CD8-positive, alpha-beta T cell (primary cell): ENCODE measurements at regions of chr7 and their contacts with region 1.

Region 1: GRCh38 chr7:126803060-126803665 is 449.6 kb downstream of the GRM8 start:
- DNase-seq: peak in 6 of 9 experiments; percentile 0 to 48 (median 16)
- ATAC-seq: no peak
- H3K4me3 ChIP-seq: no peak overlapping the region
- H3K4me3 Mint-ChIP-seq: no peak overlapping the region
- H3K27ac ChIP-seq: no peak overlapping the region
- H3K27ac Mint-ChIP-seq: no peak overlapping the region
- H3K4me1 ChIP-seq: no peaks in the 10 kb centered on the region
- H3K4me1 Mint-ChIP-seq: no peaks in the 10 kb centered on the region
- H3K27me3 ChIP-seq: no peaks in the 10 kb centered on the region
- H3K27me3 Mint-ChIP-seq: peaks cover 4% of the 10 kb centered on the region
- CTCF ChIP-seq: peak; percentile 49

Region 2: DNA sequence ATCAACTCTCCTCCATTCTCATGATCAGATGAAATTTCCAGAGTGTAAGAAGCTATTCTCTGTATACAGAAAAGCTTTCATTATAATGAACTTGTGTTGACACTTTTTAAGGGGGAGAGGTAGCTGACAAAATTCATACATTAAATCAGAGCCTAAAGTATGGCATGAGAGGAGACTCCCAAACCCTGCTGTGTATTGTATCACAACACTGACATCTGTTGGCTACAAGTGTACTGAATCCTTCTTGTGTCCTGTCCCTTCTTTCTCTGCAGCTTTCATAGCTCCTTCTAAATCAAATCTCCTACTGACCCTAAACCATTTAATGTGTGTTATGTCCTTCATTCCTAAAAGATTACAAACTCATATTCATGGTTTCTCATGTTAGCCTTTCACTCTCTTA is 711.3 kb after region 1 on chr7:
- CTCF ChIA-PET with region 1: interaction called, 4 read pairs
- POLR2A ChIA-PET with region 1: no interaction called
- intact Hi-C with region 1: loop called in 1 of 2 experiments (anchors 2 kb)
- DNase-seq: peak in 3 of 9 experiments; percentile 5 to 70 (median 55)
- ATAC-seq: peak; percentile 57
- H3K4me3 ChIP-seq: no peak overlapping the region
- H3K4me3 Mint-ChIP-seq: no peak overlapping the region
- H3K27ac ChIP-seq: no peak overlapping the region
- H3K27ac Mint-ChIP-seq: no peak overlapping the region
- H3K4me1 ChIP-seq: no peaks in the 10 kb centered on the region
- H3K4me1 Mint-ChIP-seq: no peaks in the 10 kb centered on the region
- H3K27me3 ChIP-seq: no peaks in the 10 kb centered on the region
- H3K27me3 Mint-ChIP-seq: peaks cover 17% of the 10 kb centered on the region
- CTCF ChIP-seq: peak; percentile 62

Region 3: DNA sequence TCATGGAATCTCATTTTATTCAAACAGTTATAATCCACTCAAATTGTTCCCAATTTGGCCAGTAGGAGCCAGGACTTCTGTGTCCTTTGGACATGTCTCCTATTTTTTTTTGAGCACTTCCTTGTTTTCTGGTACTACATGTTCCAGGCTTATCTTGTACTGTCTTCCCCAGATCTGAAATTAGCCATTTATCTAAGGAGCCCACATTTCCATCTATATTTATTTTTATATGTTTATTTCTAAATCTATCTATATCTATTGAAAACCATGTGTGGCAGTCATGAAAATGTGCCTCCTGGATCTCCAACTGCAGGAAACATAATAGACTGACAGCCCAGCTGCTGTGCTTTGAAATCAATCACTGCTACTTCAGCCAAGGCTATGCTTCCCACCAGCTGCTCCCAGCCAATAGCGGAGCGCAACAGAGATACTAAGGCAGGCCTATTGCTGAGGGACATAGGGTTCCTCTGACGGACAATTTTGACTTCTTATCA is 1081.0 kb after region 1 on chr7:
- CTCF ChIA-PET with region 1: no interaction called
- POLR2A ChIA-PET with region 1: no interaction called
- intact Hi-C with region 1: no loop called
- DNase-seq: no peak
- ATAC-seq: no peak
- H3K4me3 ChIP-seq: no peak overlapping the region
- H3K4me3 Mint-ChIP-seq: no peak overlapping the region
- H3K27ac ChIP-seq: no peak overlapping the region
- H3K27ac Mint-ChIP-seq: no peak overlapping the region
- H3K4me1 ChIP-seq: no peaks in the 10 kb centered on the region
- H3K4me1 Mint-ChIP-seq: peaks cover 12% of the 10 kb centered on the region
- H3K27me3 ChIP-seq: no peaks in the 10 kb centered on the region
- H3K27me3 Mint-ChIP-seq: no peaks in the 10 kb centered on the region
- CTCF ChIP-seq: no peak